Endothelial cell of umbilical vein (primary cell): ENCODE measurements at regions of chr4 and their contacts with region 1.

Region 1: DNA sequence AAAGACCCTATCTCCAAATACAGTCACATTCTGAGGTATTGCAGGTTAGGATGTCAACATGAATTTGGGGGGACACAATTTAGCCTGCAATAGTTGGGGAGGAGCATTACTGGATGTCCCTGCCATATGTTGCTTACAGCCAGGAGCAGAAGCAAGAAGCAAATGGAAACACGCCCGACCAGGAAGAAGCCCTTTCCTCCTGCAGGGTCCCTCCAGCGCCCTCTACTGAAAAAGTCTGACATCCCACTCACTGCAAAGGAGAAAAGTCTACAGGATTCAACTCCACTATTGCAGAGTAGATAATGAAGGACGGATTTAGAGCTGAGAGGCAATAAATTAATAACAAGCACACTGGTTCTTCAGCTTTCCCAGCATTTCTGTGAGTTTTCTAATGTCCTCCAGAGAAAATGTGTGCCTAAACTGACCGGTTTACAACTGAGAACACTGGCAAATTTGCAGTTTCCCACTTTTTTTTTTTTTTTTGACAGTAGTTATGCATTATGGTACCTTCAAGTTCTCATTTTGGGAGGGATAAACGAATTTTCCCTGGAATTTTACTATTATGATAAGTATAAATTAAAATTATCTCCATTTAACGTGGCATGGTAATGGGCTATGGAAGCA is 31.7 kb downstream of the COQ2 start:
- DNase-seq: peak; percentile 81
- H3K4me3 ChIP-seq: no peak overlapping the region
- H3K27ac ChIP-seq: no peak overlapping the region
- H3K4me1 ChIP-seq: peaks cover 32% of the 10 kb centered on the region
- H3K27me3 ChIP-seq: no peaks in the 10 kb centered on the region
- CTCF ChIP-seq: peak; percentile 74 to 84
- POLR2A ChIP-seq: no peak

Region 2: DNA sequence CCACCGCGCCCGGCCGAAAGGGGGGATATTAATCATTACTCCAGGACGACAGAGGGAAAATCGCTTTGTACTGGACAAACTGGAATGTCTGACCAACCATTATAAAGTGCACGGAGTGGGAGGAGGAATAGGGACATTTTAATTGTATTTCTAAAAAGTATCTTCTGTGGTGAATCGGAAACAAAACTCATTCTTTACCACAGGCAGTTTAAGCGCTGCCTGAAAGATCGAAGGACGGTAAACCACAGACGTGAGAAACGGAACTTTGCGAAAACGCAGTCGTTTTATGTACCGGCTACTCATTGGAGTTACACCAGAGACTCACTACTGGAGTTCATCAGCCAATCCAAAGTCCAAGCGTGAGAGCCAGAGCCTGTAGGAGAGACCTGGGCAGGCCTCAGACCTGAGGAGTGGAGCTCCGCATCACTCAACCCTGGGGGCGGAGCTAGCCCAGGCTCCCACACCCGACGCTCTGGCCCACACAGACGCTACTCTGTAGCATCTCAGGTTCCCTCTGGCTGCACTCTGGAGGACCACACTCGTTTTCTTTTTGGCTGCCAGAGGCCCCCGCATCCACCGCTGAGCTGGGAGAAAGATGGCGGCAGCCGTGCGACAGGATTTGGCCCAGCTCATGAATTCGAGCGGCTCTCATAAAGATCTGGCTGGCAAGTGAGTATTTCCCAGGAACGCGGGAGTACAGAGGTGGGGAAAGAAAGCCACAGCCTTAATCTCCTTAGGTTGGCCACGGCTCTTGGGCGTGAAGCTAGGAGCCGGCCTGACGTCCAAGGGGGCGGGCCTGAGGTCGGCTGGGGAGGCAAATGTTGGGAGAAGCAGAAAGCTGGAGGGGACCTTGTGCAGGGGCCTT is 218.0 kb before region 1 on chr4 and contains the start of gene COPS4:
- CTCF ChIA-PET with region 1: interaction called, 4 read pairs
- POLR2A ChIA-PET with region 1: no interaction called
- dilution Hi-C with region 1: no loop called
- intact Hi-C with region 1: loop called (anchors 1 kb)
- DNase-seq: peak; percentile 100
- H3K4me3 ChIP-seq: peak within 1 kb of the TSS; percentile 78 to 94 (median 91)
- H3K27ac ChIP-seq: peak within 1 kb of the TSS; percentile 88
- H3K4me1 ChIP-seq: peaks cover 28% of the 10 kb centered on the region
- H3K27me3 ChIP-seq: peaks cover 0 to 3% of the 10 kb centered on the region in 2 experiments
- CTCF ChIP-seq: peak in 1 of 2 donors; percentile 40
- POLR2A ChIP-seq: peak; percentile 88
- total RNA-seq, gene COPS4: 47.3 and 53.0 TPM in 2 replicates

Region 3: GRCh38 chr4:83074086-83074704 is 178.7 kb before region 1 on chr4:
- CTCF ChIA-PET with region 1: interaction called, 84 read pairs
- POLR2A ChIA-PET with region 1: no interaction called
- dilution Hi-C with region 1: no loop called
- intact Hi-C with region 1: loop called (anchors 1 kb)
- DNase-seq: peak; percentile 72
- H3K4me3 ChIP-seq: no peak overlapping the region
- H3K27ac ChIP-seq: no peak overlapping the region
- H3K4me1 ChIP-seq: peaks cover 28% of the 10 kb centered on the region
- H3K27me3 ChIP-seq: no peaks in the 10 kb centered on the region
- CTCF ChIP-seq: peak; percentile 59 to 63
- POLR2A ChIP-seq: no peak

Region 4: DNA sequence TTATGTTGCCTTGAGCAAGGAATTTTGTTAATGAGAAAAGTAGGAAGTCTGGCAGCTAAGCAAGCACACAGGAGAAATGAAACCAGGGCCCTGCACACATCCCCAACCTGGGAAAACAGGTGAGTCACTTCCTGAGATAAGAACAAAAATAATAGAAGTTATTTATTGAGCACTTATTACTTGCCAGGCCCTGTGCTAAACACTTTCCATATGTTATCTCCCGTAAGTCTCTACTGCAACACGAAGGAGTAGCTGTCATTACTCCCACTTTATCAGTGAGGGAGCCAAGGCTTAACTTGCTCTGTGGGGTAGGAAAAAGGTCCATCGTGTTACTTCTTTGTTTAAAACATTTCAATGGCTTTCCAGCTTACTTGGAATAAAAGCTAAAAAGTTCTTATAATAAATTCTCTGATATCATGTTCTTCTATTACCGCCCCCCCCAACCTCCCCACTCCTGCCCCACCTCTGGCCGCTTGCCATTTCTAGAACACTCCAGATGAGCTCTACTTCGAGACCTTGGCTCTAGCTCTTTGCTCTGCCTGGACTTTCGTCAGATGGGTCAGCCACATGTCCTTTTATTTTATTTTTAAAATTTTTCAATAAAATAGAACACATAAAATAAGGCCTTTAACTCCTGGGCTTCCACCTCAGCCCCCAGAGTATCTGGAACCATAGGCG is 102.1 kb before region 1 on chr4:
- CTCF ChIA-PET with region 1: interaction called, 6 read pairs
- POLR2A ChIA-PET with region 1: interaction called, 8 read pairs
- dilution Hi-C with region 1: no loop called
- intact Hi-C with region 1: loop called (anchors 1 kb)
- DNase-seq: peak; percentile 87
- H3K4me3 ChIP-seq: peak overlapping the region in 1 of 3 experiments; percentile 7
- H3K27ac ChIP-seq: peak overlapping the region; percentile 78
- H3K4me1 ChIP-seq: peaks cover 38% of the 10 kb centered on the region
- H3K27me3 ChIP-seq: no peaks in the 10 kb centered on the region
- CTCF ChIP-seq: no peak
- POLR2A ChIP-seq: peak; percentile 16

Region 5: DNA sequence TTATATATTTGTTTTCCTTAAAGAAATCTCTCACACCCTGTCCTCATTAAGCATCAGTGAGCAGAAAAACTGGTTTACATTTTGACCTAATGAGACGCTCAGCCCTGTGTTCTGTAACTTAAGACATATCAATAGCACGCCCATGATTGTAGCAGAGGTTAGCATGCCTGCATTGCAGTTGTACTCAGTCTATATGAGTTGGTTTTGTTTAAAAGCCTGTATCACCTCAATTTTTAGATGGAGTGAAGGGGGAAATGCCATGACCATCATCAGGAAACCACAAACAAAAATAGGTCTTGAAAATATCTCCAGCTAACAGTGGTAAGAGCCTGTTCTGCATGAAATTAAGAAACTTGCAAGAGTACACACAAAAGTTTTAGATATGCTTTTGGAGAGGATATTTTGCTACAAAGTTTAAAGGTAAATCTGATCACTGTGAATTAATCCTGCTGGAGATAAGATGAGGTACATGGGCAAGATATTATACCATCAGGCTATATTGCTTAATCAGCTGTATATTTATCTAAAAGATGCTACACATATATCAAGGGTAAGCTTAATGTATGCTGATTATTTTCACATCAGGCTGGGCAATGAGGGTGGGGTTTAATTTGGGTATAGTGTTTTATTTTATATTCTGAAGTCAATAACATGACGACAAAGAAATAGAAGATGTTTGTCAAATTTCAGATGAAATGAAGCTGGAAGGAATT is 44.8 kb after region 1 on chr4:
- CTCF ChIA-PET with region 1: no interaction called
- POLR2A ChIA-PET with region 1: no interaction called
- dilution Hi-C with region 1: no loop called
- intact Hi-C with region 1: no loop called
- DNase-seq: no peak
- H3K4me3 ChIP-seq: no peak overlapping the region
- H3K27ac ChIP-seq: no peak overlapping the region
- H3K4me1 ChIP-seq: no peaks in the 10 kb centered on the region
- H3K27me3 ChIP-seq: no peaks in the 10 kb centered on the region
- CTCF ChIP-seq: no peak
- POLR2A ChIP-seq: no peak